K562 (cell line): ENCODE measurements at regions of chr12 and their contacts with region 1.

Region 1: GRCh38 chr12:26884765-26885576 is 52.0 kb upstream of the ITPR2 start:
- DNase-seq: peak; percentile 70 to 84 (median 76)
- ATAC-seq: peak; percentile 97
- H3K4me3 ChIP-seq: no peak overlapping the region
- H3K27ac ChIP-seq: no peak overlapping the region
- H3K4me1 ChIP-seq: peaks cover 0 to 4% of the 10 kb centered on the region in 2 experiments; a peak in 3 of 5 replicates
- H3K27me3 ChIP-seq: 0 out of 5 replicates have a peak, but pooled peaks cover 0 to 3% of the 10 kb centered on the region in 2 experiments
- CTCF ChIP-seq: peak; percentile 90 to 94 (median 93)
- EP300 ChIP-seq: no peak
- POLR2A ChIP-seq: no peak
- RAD21 ChIP-seq: peak; percentile 80 to 87

Region 2: GRCh38 chr12:26783131-26783526 is 101.8 kb before region 1 on chr12:
- CTCF ChIA-PET with region 1: no interaction called
- POLR2A ChIA-PET with region 1: no interaction called
- in situ Hi-C with region 1: no loop called
- intact Hi-C with region 1: loop called (anchors 5 kb)
- DNase-seq: no peak
- ATAC-seq: no peak
- H3K4me3 ChIP-seq: no peak overlapping the region
- H3K27ac ChIP-seq: no peak overlapping the region
- H3K4me1 ChIP-seq: no peaks in the 10 kb centered on the region; a peak in 1 of 5 replicates
- H3K27me3 ChIP-seq: 0 out of 5 replicates have a peak, but pooled peaks cover 0 to 2% of the 10 kb centered on the region in 2 experiments
- CTCF ChIP-seq: no peak
- EP300 ChIP-seq: no peak
- POLR2A ChIP-seq: no peak
- RAD21 ChIP-seq: no peak